Ascending aorta (tissue), 2 donors: ENCODE measurements at regions of chr2 and their contacts with region 1.

Region 1: GRCh38 chr2:96760036-96760985 is at the start of gene CNNM4:
- DNase-seq: peak; percentile 79 to 97
- H3K4me3 ChIP-seq: peak within 1 kb of the TSS; percentile 64 to 94
- H3K27ac ChIP-seq: peak within 1 kb of the TSS; percentile 64 to 87
- H3K4me1 ChIP-seq: peaks cover 10 to 20% of the 10 kb centered on the region in 2 donors
- H3K27me3 ChIP-seq: no peaks in the 10 kb centered on the region
- CTCF ChIP-seq: no peak
- total RNA-seq, gene CNNM4: 2.7 TPM

Region 2: GRCh38 chr2:96536445-96537065 is 223.8 kb before region 1 on chr2 and contains the start of gene ARID5A:
- intact Hi-C with region 1: loop called (anchors 5 kb)
- DNase-seq: peak; percentile 87 to 98
- H3K4me3 ChIP-seq: peak within 1 kb of the TSS; percentile 83 to 99
- H3K27ac ChIP-seq: peak within 1 kb of the TSS; percentile 96 to 99
- H3K4me1 ChIP-seq: peaks cover 28 to 66% of the 10 kb centered on the region in 2 donors
- H3K27me3 ChIP-seq: no peaks in the 10 kb centered on the region
- CTCF ChIP-seq: peak; percentile 40 to 47 (median 46)
- total RNA-seq, gene ARID5A: 267 TPM

Region 3: GRCh38 chr2:96665083-96665569 is 95.2 kb before region 1 on chr2:
- intact Hi-C with region 1: loop called (anchors 1 kb)
- DNase-seq: peak in 1 of 2 donors; percentile 85
- H3K4me3 ChIP-seq: no peak overlapping the region
- H3K27ac ChIP-seq: peak overlapping the region; percentile 87 to 92
- H3K4me1 ChIP-seq: peaks cover 8 to 12% of the 10 kb centered on the region in 2 donors
- H3K27me3 ChIP-seq: no peaks in the 10 kb centered on the region
- CTCF ChIP-seq: no peak

Region 4: GRCh38 chr2:96739633-96740428 is 20.5 kb before region 1 on chr2 and contains the start of gene LMAN2L:
- intact Hi-C with region 1: loop called (anchors 1 kb)
- DNase-seq: peak; percentile 97 to 99
- H3K4me3 ChIP-seq: peak within 1 kb of the TSS; percentile 80 to 92
- H3K27ac ChIP-seq: peak within 1 kb of the TSS; percentile 66 to 73
- H3K4me1 ChIP-seq: peaks cover 0 to 19% of the 10 kb centered on the region in 2 donors
- H3K27me3 ChIP-seq: no peaks in the 10 kb centered on the region
- CTCF ChIP-seq: peak in 1 of 3 experiments; percentile 9
- total RNA-seq, gene LMAN2L: 9.5 TPM

Region 5: GRCh38 chr2:96801005-96801785 is 40.9 kb after region 1 on chr2:
- intact Hi-C with region 1: loop called (anchors 5 kb)
- DNase-seq: peak in 1 of 2 donors; percentile 80
- H3K4me3 ChIP-seq: no peak overlapping the region
- H3K27ac ChIP-seq: no peak overlapping the region
- H3K4me1 ChIP-seq: peaks cover 0 to 4% of the 10 kb centered on the region in 2 donors
- H3K27me3 ChIP-seq: no peaks in the 10 kb centered on the region
- CTCF ChIP-seq: peak; percentile 77 to 89 (median 88)

Region 6: GRCh38 chr2:96856776-96857673 is 96.7 kb after region 1 on chr2:
- intact Hi-C with region 1: loop called (anchors 2 kb)
- DNase-seq: no peak
- H3K4me3 ChIP-seq: peak overlapping the region; percentile 63 to 84
- H3K27ac ChIP-seq: peak overlapping the region; percentile 61 to 79
- H3K4me1 ChIP-seq: peaks cover 3 to 22% of the 10 kb centered on the region in 2 donors
- H3K27me3 ChIP-seq: no peaks in the 10 kb centered on the region
- CTCF ChIP-seq: no peak

Region 7: GRCh38 chr2:96960153-96960961 is 200.0 kb after region 1 on chr2:
- intact Hi-C with region 1: loop called (anchors 5 kb)
- DNase-seq: peak in 1 of 2 donors; percentile 90
- H3K4me3 ChIP-seq: no peak overlapping the region
- H3K27ac ChIP-seq: no peak overlapping the region
- H3K4me1 ChIP-seq: no peaks in the 10 kb centered on the region
- H3K27me3 ChIP-seq: no peaks in the 10 kb centered on the region
- CTCF ChIP-seq: peak; percentile 69 to 85 (median 73)